Activated T-helper 1 cell treated with anti-CD3 and anti-CD28 coated beads, Interleukin-12 subunit alpha, Interleukin-12 subunit beta, Interleukin-2, Interleukin-4 antibody, amounts not matched to agents 30 ng/mL and 10 ng/mL and 1 ng/mL, durations not matched to agents 14 hours and 24 hours and 36 hours (primary cell): ENCODE measurements at regions of chr13 and their contacts with region 1.

Region 1: GRCh38 chr13:79522583-79522982 is 41.6 kb downstream of the NDFIP2 start:
- DNase-seq: peak; percentile 54
- H3K4me3 Mint-ChIP-seq: peak overlapping the region; percentile 43
- H3K27ac Mint-ChIP-seq: peak overlapping the region; percentile 86
- H3K4me1 Mint-ChIP-seq: peaks cover 43% of the 10 kb centered on the region
- H3K27me3 Mint-ChIP-seq: no peaks in the 10 kb centered on the region

Region 2: DNA sequence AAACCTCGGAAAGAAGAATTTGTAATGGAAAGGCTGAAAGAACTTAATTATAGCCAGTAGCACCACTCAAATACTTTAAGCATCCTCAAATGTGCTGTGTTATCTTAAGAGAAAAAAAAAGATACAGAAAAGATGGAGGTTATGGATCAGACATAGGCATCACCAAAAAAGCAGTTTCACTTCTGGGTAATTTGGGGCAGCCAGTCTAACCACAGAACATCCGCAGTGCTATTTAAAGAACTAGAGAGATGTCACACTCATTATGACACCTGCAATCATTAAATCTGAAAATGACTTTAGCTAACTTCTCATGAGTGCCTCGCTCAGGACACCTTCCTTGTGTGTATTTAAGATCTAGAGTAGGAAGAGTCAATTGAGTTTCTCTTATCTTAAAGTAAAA is 328.3 kb before region 1 on chr13:
- intact Hi-C with region 1: loop called (anchors 10 kb)
- DNase-seq: peak; percentile 62
- H3K4me3 Mint-ChIP-seq: peak overlapping the region; percentile 60
- H3K27ac Mint-ChIP-seq: peak overlapping the region; percentile 22
- H3K4me1 Mint-ChIP-seq: peaks cover 56% of the 10 kb centered on the region
- H3K27me3 Mint-ChIP-seq: no peaks in the 10 kb centered on the region

Region 3: DNA sequence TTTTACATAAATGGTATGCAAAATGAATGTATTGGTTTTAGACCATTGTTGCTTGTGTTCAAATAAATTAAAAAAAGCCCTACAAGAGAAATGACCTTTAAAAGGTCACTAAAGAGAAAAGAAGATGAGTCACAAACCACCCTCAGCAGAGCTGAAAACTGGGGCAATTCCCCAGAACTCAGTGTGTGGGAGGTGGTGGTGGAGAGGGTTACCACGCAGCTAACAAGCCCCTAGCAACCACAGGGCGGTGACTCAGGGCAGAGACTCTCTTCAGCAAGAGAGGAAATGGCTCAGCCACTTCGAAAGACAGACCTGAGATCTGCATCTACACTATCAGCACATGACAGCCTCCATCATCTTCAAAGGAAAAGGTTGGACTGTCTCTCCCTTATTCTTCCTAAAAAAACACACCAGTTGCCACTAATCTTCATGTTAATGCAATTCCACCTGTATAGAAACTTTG is 71.1 kb before region 1 on chr13:
- intact Hi-C with region 1: loop called (anchors 1 kb)
- DNase-seq: peak; percentile 89
- H3K4me3 Mint-ChIP-seq: peak overlapping the region; percentile 78
- H3K27ac Mint-ChIP-seq: peak overlapping the region; percentile 98
- H3K4me1 Mint-ChIP-seq: peaks cover 92% of the 10 kb centered on the region
- H3K27me3 Mint-ChIP-seq: no peaks in the 10 kb centered on the region

Region 4: DNA sequence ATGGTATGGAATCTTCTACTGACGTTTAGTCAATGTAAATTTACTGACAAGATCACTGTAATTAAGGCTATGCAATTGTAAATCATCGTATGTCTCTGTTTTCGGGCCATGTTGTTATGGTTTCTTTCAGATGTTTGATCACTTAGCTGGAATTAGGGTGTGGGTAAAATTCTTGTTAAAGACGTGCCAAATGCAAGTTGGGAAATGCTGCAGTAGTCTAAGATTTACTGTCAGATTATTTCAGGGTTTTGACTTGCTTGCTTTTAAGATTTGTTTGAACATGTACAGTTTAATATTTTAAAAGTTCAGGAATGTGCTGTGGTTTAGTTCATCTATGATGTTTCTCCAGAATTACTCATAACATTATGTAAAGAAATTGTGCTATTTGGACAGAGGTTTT is 30.9 kb before region 1 on chr13:
- intact Hi-C with region 1: loop called (anchors 1 kb)
- DNase-seq: no peak
- H3K4me3 Mint-ChIP-seq: peak overlapping the region; percentile 63
- H3K27ac Mint-ChIP-seq: peak overlapping the region; percentile 93
- H3K4me1 Mint-ChIP-seq: peaks cover 94% of the 10 kb centered on the region
- H3K27me3 Mint-ChIP-seq: no peaks in the 10 kb centered on the region

Region 5: DNA sequence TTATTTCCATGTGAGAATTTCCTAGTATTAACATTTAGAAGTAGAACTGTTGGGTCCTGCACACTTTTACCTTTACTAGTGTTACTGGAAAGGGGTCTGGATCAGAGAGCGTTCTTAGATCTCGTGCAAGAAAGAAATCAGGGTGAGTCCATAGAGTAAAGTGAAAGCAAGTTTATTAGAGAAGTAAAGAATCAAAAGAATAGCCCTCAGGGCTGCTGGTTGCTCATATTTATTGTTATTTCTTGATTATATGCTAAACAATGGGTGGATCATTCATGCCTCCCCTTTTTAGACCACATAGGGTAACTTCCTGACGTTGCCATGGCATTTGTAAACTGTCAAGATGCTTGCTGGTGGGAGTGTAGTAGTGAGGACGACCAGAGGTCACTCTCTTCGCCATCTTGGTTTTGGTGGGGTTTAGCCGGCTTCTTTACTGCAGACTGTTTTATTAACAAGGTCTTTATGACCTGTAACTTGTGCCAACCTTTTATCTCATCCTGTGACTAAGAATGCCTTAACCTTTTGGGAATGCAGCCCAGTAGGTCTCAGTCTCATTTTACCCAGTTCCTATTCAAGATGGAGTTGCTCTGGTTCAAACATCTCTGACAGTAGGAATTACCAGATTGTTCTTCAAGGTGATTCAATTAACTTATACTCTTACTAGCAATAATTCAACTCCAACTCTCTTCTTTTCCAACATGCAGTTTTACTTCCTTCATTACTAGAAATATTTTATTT is 14.2 kb before region 1 on chr13:
- intact Hi-C with region 1: loop called (anchors 1 kb)
- DNase-seq: no peak
- H3K4me3 Mint-ChIP-seq: no peak overlapping the region
- H3K27ac Mint-ChIP-seq: no peak overlapping the region
- H3K4me1 Mint-ChIP-seq: peaks cover 84% of the 10 kb centered on the region
- H3K27me3 Mint-ChIP-seq: no peaks in the 10 kb centered on the region

Region 6: GRCh38 chr13:80496721-80497397 is 974.3 kb after region 1 on chr13:
- intact Hi-C with region 1: no loop called
- DNase-seq: no peak
- H3K4me3 Mint-ChIP-seq: no peak overlapping the region
- H3K27ac Mint-ChIP-seq: no peak overlapping the region
- H3K4me1 Mint-ChIP-seq: no peaks in the 10 kb centered on the region
- H3K27me3 Mint-ChIP-seq: no peaks in the 10 kb centered on the region